Right lobe of liver (tissue), 6 donors: ENCODE measurements at regions of chr11 and their contacts with region 1.

Region 1: DNA sequence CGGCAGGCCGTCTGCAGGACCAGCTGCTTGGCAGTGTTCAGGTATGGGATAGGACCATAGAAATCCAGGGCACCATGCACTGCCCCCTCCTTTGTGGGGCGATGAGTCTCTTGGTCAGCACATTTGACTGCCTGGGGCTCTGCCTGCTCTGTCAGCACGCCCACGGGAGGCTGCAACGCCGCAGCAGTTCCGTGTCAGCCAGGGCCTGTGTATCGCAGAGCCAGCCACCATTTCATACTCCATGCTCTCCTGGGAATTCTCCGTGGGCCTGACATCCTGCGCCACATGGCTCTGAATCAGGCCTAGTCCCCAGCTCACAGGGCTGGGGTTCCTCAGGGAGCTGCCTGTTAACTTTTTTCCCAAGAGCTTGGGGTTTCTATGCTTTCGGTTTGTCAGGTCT is 16.9 kb upstream of the RELT start:
- DNase-seq: no peak
- ATAC-seq: no peak
- H3K4me3 ChIP-seq: no peak overlapping the region
- H3K27ac ChIP-seq: no peak overlapping the region
- H3K4me1 ChIP-seq: no peaks in the 10 kb centered on the region
- H3K27me3 ChIP-seq: no peaks in the 10 kb centered on the region
- CTCF ChIP-seq: no peak
- POLR2A ChIP-seq: no peak

Region 2: DNA sequence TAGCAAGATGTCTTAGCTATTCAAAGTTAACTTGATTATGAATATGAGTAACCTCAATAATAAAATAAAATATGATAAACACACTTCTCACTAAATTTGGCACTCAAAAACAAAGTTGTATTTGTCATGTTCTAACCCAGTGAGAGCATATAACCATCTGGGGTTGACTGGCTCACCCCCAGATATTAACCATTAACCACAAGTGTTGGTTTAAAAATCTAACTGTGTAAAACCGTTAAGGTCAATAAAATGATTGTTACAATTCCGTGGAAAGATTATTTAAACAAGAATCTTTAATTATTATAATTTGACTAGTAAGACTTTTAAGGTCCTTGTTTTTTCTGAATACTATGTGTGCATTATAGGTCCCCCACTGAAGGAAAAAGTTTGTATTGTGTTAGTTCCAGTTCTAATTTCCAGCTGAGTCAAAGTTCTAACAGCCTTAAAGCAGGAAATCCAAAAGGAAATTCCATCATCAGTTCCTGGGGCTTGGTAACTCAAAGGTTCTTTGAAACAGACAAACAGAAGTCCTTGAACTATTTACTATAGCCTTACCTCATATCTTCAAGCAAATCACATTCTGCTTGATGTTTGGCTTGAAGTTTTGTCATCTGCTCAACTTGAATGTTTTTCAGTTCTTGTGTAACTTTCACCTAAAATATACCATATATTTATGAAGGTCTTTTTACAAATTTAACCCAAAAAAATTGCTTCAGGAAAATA is 219.7 kb before region 1 on chr11:
- intact Hi-C with region 1: no loop called
- DNase-seq: no peak
- ATAC-seq: peak in 1 of 4 donors; percentile 4
- H3K4me3 ChIP-seq: peak overlapping the region; percentile 75 to 86 (median 84)
- H3K27ac ChIP-seq: peak overlapping the region; percentile 94 to 97 (median 96)
- H3K4me1 ChIP-seq: peaks cover 0 to 51% (median 23%) of the 10 kb centered on the region in 4 donors
- H3K27me3 ChIP-seq: no peaks in the 10 kb centered on the region
- CTCF ChIP-seq: no peak
- POLR2A ChIP-seq: no peak

Region 3: GRCh38 chr11:73393479-73394380 is 34.4 kb after region 1 on chr11:
- intact Hi-C with region 1: loop called in 1 of 2 experiments (anchors 5 kb)
- DNase-seq: peak; percentile 68 to 77 (median 76)
- ATAC-seq: peak; percentile 80 to 87 (median 84)
- H3K4me3 ChIP-seq: no peak overlapping the region
- H3K27ac ChIP-seq: no peak overlapping the region
- H3K4me1 ChIP-seq: no peaks in the 10 kb centered on the region
- H3K27me3 ChIP-seq: no peaks in the 10 kb centered on the region
- CTCF ChIP-seq: peak; percentile 73 to 82 (median 80)
- POLR2A ChIP-seq: no peak

Region 4: DNA sequence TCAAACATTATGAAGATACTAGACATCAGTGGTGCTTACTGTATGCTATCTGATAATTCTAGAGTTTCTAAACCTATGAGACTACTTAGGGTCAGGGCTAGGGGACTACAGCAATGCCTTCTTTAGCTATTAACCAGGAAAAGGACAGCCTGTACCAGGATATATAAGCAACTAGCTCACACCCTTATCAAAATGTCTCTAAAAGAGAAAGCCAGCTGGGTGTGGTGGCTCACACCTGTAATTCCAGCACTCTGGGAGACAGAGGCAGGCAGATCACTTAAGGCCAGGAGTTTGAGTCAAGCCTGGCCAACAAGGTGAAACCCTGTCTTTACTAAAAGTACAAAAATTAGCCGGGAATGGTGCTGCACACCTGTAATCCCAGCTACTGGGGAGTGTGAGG is 345.7 kb after region 1 on chr11:
- intact Hi-C with region 1: no loop called
- DNase-seq: no peak
- ATAC-seq: no peak
- H3K4me3 ChIP-seq: no peak overlapping the region
- H3K27ac ChIP-seq: no peak overlapping the region
- H3K4me1 ChIP-seq: no peaks in the 10 kb centered on the region
- H3K27me3 ChIP-seq: no peaks in the 10 kb centered on the region
- CTCF ChIP-seq: no peak
- POLR2A ChIP-seq: no peak